ENCODE measurements at regions of chr13 and their contacts with region 1.

Region 1: GRCh38 chr13:26482451-26483197 is 74.9 kb upstream of the WASF3 start:
- DNase-seq: peak; percentile 95

Region 2: GRCh38 chr13:26186118-26186870 is 296.3 kb before region 1 on chr13:
- in situ Hi-C with region 1: loop called (anchors 10 kb)
- DNase-seq: peak; percentile 94

Region 3: DNA sequence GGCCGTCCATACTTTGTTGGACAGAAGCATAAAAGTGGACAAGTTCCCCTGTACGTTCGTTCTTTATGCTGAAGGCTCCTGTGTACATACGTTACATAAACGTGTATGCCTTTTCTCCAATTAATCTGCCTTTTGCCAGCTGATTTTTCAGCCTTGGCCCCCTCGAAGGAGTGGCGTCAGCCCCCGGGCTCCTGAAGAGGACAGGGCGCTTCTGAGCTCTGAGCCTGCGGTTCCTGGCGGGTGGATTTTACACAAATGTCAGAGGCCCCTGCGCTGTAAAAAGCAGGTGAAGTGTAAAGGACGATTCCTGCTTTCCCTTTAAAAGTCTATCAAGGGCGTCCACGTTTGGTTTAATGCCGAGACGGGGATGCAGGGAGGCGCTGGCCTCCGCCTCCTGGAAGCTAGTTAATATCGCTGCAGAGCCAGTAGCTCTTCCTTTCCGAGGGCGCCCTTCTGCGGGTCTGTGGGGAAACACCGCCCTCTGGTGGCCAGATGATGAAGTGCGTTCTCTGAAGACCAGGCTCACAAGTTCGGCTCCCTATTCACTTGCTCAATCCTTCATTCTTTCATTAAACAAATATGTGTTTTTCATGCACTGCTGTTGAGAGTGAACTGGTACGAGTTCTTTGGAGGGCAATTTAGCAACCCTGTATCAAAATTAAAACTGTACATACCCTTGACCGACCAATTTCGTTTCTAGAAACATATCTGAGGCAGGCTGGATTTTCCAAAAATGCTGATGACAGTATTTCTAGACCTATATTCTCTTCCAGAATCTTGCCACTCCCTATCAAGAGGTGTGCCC is 216.0 kb after region 1 on chr13:
- in situ Hi-C with region 1: loop called (anchors 25 kb)
- DNase-seq: peak; percentile 86

Region 4: DNA sequence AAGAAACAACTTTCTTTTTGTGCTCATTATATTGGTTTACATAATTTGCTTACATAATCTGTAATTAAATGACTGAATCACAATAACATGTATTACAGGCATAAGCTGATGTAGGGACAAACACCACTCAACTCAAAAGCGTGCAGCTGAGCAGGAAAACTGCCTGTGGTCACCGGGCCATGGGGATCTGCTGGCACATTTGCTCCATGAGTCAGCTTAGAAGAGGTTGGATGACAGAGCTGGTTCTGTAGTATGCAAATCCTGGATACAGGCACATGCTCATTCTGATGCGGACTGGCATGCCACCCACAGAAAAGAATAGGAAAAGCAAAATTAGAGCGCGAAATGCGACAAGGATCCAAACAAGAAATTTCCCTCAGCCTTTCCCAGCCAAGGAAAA is 560.4 kb after region 1 on chr13:
- in situ Hi-C with region 1: no loop called
- DNase-seq: peak; percentile 38